Dendritic cell treated with granulocyte-macrophage colony-stimulating factor and Interleukin-4, amounts not matched to agents 40 ng/mL and 50 ng/mL, for 4 days (primary cell): ENCODE measurements at regions of chr2 and their contacts with region 1.

Region 1: GRCh38 chr2:45729753-45730512 is 78.5 kb downstream of the PRKCE start:
- H3K4me3 Mint-ChIP-seq: no peak overlapping the region
- H3K27ac Mint-ChIP-seq: peak overlapping the region; percentile 46
- H3K4me1 Mint-ChIP-seq: peaks cover 41% of the 10 kb centered on the region
- H3K27me3 Mint-ChIP-seq: no peaks in the 10 kb centered on the region

Region 2: DNA sequence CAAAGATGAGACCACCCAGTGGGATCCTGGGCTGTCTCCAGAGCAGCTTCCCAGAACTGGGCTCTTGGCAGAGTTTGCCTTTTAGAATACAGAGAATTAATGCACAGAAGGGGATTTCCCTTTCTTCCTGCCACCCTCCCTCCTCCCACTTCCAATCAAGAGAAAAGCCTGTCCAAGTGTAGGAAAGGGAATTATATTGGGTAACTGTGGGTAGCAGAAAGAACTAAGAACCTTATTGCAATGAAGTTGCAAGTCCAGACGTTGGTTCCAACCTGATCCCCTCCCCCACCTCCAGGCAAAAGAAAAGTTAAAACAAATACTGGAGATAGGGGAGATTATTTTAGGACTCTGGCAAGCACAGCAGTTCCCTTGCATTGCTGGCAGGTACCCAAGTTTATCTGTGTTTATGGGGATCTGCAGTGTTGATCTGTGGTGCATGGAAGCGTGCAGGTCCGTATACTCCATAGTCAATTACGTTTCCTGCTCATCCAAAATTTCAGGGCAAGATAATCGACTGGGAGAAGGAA is 35.9 kb after region 1 on chr2:
- intact Hi-C with region 1: loop called (anchors 5 kb)
- H3K4me3 Mint-ChIP-seq: no peak overlapping the region
- H3K27ac Mint-ChIP-seq: peak overlapping the region; percentile 5
- H3K4me1 Mint-ChIP-seq: peaks cover 58% of the 10 kb centered on the region
- H3K27me3 Mint-ChIP-seq: peaks cover 3% of the 10 kb centered on the region

Region 3: DNA sequence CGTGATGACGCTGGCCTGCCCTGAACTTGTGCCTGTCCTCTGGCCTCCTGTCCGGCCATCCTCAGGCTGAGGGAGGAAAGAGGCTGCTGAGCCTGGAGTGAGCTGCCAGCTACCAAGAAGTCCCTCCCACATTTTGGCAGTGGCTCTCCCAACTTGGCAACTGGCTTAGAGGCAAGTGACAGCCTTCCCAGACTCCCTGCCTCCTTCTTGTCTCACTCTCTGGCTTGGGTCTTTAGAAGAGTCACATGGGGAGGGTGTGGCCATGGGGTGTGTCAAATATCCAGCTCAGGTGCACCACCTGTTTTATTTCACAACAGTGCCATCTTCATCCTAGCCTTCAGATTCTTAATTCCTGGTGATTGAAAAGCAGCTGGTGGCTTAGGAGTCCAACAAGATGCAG is 144.4 kb after region 1 on chr2:
- intact Hi-C with region 1: no loop called
- H3K4me3 Mint-ChIP-seq: no peak overlapping the region
- H3K27ac Mint-ChIP-seq: no peak overlapping the region
- H3K4me1 Mint-ChIP-seq: peaks cover 6% of the 10 kb centered on the region
- H3K27me3 Mint-ChIP-seq: peaks cover 2% of the 10 kb centered on the region

Region 4: DNA sequence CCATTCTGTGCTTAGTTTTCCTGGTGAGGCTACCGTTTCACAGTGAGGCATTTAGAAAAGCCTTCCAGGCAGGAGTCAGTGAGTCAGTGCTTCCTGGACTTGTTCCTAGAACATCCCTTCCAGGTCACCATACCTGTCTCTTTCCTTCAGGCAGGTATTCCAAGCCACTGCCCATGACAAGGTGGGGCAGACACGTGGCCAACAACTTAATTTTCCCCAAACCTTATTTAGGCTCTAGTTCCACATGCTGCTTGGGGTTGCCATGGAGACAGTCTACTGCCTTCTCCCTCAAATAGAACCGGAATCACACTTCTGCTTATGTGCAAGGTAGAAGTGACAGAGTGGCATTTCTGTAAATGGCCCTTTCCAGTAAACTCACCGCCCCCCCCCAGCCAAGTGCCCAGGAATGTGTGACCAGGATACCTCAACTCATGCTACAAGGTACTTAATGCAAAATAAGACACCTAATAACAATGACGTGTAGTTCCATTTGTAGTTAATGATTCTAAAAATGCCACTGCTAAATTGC is 179.8 kb after region 1 on chr2:
- intact Hi-C with region 1: no loop called
- H3K4me3 Mint-ChIP-seq: no peak overlapping the region
- H3K27ac Mint-ChIP-seq: no peak overlapping the region
- H3K4me1 Mint-ChIP-seq: peaks cover 9% of the 10 kb centered on the region
- H3K27me3 Mint-ChIP-seq: no peaks in the 10 kb centered on the region